Panc1 (cell line): ENCODE measurements at regions of chr10 and their contacts with region 1.

Region 1: GRCh38 chr10:28663576-28664313 is 13.6 kb upstream of the BAMBI start:
- DNase-seq: peak; percentile 58
- ATAC-seq: peak; percentile 91
- H3K4me3 ChIP-seq: no peak overlapping the region
- H3K27ac ChIP-seq: no peak overlapping the region
- H3K4me1 ChIP-seq: no peaks in the 10 kb centered on the region; the same call in 1 of the 2 replicates
- H3K27me3 ChIP-seq: 0 out of 2 replicates have a peak, but pooled peaks cover 11% of the 10 kb centered on the region
- CTCF ChIP-seq: peak; percentile 90

Region 2: DNA sequence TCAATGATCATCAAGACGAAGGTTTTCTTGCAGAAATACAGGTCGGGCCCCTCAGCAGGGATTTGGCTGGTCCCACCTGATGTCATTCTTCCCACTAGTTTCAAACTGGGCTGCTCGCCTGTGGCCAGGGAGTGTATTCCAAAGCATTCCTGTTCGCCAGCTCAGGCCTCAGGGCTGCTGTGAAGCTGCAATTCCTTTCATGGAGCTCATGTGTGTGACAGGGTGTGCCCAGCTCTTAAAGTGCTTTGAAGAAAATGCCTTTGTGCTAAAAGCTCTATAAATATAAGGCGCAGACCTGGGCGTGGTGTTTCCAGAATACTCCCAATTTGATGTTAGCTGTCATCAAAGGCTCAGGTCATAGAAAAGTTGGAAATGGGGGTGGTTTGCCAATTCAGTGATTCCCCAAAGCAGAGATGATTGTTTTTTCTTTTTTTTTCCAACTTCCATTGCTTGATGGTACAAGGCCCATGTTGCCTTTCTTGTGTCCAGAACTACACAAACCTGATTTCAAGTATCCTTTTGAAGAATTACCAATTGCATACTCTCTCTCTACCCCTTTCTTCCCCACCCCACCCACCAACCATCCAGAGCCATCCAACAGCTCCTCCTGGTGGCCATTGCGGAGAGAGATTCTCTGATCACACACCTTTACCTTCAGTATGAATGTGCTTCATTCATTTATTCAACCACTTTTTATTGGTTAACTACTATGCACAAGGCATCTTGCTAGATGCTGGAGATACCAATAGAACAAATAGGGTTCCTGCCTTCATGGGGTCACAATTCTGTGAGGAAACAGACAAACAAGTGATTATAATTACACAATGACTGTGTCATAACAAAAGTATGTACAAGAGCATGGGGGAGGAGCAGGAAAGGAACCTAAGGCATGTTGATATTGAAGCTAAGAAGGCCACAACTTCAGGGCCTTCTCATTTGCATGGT is 327.9 kb after region 1 on chr10:
- CTCF ChIA-PET with region 1: interaction called, 7 read pairs
- POLR2A ChIA-PET with region 1: no interaction called
- in situ Hi-C with region 1: no loop called
- intact Hi-C with region 1: loop called (anchors 5 kb)
- DNase-seq: no peak
- ATAC-seq: peak; percentile 72
- H3K4me3 ChIP-seq: no peak overlapping the region
- H3K27ac ChIP-seq: no peak overlapping the region
- H3K4me1 ChIP-seq: no peaks in the 10 kb centered on the region
- H3K27me3 ChIP-seq: no peaks in the 10 kb centered on the region
- CTCF ChIP-seq: peak; percentile 71

Region 3: DNA sequence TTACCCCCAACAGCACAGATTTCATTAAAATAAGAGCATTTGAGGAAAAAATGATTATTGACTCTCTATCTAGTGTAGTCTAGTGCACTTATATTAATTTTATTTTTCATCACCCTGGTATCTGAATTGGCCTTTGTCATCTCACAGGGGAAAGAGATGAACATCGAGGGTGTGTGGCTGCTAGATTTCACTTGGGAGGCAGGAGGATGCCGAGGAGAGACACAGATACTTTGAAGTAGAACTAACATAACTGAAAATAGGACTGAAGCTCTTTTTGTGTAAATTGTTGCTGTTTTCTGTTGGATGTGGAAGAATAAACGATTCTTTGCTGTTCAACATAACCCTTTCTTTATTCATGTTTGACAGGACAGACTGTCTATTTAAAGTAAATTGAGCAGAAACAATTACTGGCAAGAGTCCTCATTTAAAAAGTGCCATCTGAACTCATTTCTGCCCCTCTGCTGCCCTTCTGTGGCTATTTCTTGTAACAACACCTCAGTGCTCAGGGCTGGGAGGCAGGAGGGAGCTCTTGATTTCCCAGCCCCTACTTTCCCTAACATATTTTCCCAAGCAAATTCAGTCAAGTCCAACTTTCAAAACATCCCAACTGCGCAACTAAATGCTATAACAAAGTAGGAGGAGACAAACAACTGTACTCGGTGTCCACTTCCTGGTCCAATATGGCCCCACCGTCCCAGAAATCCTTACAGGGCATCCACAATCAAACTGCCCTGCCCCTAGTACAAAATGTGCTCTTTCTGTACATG is 640.7 kb after region 1 on chr10:
- CTCF ChIA-PET with region 1: interaction called, 4 read pairs
- POLR2A ChIA-PET with region 1: no interaction called
- in situ Hi-C with region 1: no loop called
- intact Hi-C with region 1: loop called (anchors 1 kb)
- DNase-seq: peak; percentile 39
- ATAC-seq: peak; percentile 85; the same call in 1 of the 2 replicates
- H3K4me3 ChIP-seq: no peak overlapping the region
- H3K27ac ChIP-seq: peak overlapping the region; percentile 51; the same call in 1 of the 2 replicates
- H3K4me1 ChIP-seq: no peaks in the 10 kb centered on the region; the same call in 1 of the 2 replicates
- H3K27me3 ChIP-seq: no peaks in the 10 kb centered on the region
- CTCF ChIP-seq: peak; percentile 75